ENCODE measurements at regions of chr5 and their contacts with region 1.

Region 1: DNA sequence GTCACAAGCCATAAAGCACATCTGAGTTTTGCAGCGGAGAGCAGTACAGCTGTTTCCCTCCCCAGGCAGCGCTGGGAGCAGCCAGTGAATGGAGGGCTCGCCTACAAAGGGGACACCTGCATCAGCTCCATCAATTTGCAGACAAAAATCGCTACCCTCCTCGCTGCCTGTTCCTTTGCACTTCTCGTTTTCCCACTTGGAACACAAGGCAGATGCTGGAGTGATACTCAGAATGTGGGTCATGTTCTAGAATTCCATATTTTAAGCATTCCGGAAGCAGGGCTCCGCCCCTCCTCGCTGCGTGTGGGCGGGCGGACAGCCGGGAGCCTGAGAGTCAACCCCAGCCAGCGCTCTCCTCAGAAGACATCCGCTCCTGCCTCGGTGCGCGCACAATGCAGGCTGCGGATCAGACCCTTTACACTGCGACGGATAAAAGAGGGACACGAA is 92.1 kb downstream of the LMNB1 start:
- DNase-seq: peak; percentile 40
- CTCF ChIP-seq: no peak

Region 2: GRCh38 chr5:127313847-127314473 is 444.9 kb after region 1 on chr5:
- in situ Hi-C with region 1: loop called (anchors 25 kb)
- DNase-seq: peak; percentile 53
- CTCF ChIP-seq: peak; percentile 90